ENCODE measurements at regions of chrX and their contacts with region 1.

Region 1: GRCh38 chrX:9352694-9353411 is 112.0 kb upstream of the TBL1X start:
- DNase-seq: peak; percentile 38
- ATAC-seq: peak; percentile 87
- H3K4me3 ChIP-seq: peak overlapping the region; percentile 15; the same call in 1 of the 2 replicates
- H3K27ac ChIP-seq: peak overlapping the region; percentile 79
- H3K4me1 ChIP-seq: peaks cover 5% of the 10 kb centered on the region; the same call in 1 of the 2 replicates
- H3K27me3 ChIP-seq: no peaks in the 10 kb centered on the region
- CTCF ChIP-seq: no peak
- EP300 ChIP-seq: peak in 1 of 2 experiments; percentile 50; a peak in 2 of 4 replicates
- POLR2A ChIP-seq: 0 out of 2 replicates have a peak, but pooled peaks have one; percentile 15
- RAD21 ChIP-seq: no peak

Region 2: GRCh38 chrX:9456250-9457074 is 103.6 kb after region 1 on chrX:
- CTCF ChIA-PET with region 1: no interaction called
- POLR2A ChIA-PET with region 1: no interaction called
- RAD21 ChIA-PET with region 1: no interaction called
- SMC1A ChIA-PET with region 1: no interaction called
- in situ Hi-C with region 1: loop called (anchors 5 kb)
- intact Hi-C with region 1: no loop called
- DNase-seq: no peak
- ATAC-seq: no peak
- H3K4me3 ChIP-seq: no peak overlapping the region
- H3K27ac ChIP-seq: no peak overlapping the region
- H3K4me1 ChIP-seq: no peaks in the 10 kb centered on the region
- H3K27me3 ChIP-seq: no peaks in the 10 kb centered on the region
- CTCF ChIP-seq: no peak
- EP300 ChIP-seq: no peak
- POLR2A ChIP-seq: no peak
- RAD21 ChIP-seq: no peak